Lower leg skin (tissue), 4 donors: ENCODE measurements at regions of chr12 and their contacts with region 1.

Region 1: GRCh38 chr12:111812881-111813741 is 28.9 kb upstream of the MAPKAPK5 start:
- DNase-seq: peak; percentile 83 to 95
- H3K4me3 ChIP-seq: no peak overlapping the region
- CTCF ChIP-seq: peak in 1 of 3 donors; percentile 71
- POLR2A ChIP-seq: no peak

Region 2: DNA sequence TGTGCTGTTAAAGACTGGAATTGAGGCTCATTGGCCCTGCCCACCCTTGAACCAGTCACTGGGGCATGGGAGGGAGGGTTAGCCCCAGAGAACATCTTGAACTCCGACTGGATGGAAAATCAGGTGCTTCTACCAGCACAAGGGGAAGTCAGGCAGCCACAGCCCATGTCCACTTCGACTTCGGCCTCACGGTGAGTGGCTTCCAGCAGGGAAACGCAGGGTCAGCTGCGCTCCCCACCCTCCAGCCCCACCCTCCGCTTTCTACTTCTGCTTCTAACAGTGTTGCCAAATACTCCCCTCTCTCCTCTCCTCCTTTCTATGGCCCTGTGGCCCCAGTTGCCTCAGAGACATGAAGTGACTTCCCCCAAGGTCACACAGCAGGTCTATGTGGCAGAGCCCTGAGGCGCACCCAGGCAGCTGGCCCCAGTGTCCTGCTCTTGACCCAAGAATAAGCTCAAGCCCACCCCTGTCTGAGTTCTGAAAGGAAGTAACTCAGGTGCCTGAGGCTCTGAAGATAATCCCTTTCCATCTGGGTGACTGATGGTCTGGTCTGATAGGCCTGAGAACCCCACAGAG is 419.3 kb before region 1 on chr12:
- intact Hi-C with region 1: no loop called
- DNase-seq: peak; percentile 73 to 90
- H3K4me3 ChIP-seq: no peak overlapping the region
- CTCF ChIP-seq: no peak
- POLR2A ChIP-seq: no peak

Region 3: DNA sequence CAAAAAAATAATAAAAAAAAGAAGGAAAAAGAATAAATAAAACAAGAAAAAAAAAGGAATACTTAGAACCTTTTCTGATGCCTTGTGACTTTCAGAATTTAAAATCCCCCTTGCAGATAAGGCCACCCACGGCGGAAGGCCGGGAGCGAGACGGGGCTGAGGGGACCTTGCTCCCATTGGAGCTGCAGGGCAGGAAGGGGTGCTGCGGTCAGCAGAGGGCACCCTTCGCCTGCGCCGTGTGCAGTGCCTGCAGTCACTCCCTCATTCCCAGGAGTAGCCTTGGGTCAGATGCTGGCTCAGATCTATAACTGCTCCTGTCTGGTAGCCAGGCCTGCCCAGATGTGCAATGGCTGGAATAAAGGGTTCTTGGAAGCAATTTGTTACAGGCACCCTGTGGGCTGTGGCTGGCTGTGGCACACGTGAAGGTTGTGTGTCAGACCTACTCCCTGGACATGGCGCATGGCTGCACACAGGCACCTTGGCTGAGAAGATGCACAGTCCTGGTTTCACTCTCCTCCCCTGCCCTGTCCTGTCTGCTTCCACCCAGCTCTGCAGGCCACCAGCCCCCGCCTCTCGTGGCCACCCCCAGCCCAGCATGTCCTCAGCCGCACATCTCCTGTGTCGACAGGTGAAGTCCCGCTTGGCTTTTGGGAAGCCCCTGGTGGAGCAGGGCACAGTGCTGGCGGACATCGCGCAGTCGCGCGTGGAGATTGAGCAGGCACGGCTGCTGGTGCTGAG is 59.8 kb before region 1 on chr12:
- intact Hi-C with region 1: loop called (anchors 5 kb)
- DNase-seq: peak in 1 of 2 donors; percentile 91
- H3K4me3 ChIP-seq: no peak overlapping the region
- CTCF ChIP-seq: no peak
- POLR2A ChIP-seq: no peak

Region 4: GRCh38 chr12:111826992-111827391 is 13.9 kb after region 1 on chr12:
- intact Hi-C with region 1: loop called (anchors 1 kb)
- DNase-seq: peak in 1 of 2 donors; percentile 42
- H3K4me3 ChIP-seq: no peak overlapping the region
- CTCF ChIP-seq: no peak
- POLR2A ChIP-seq: no peak